ENCODE measurements at regions of chr11 and their contacts with region 1.

Region 1: GRCh38 chr11:106520146-106520912 is 442.9 kb downstream of the AASDHPPT start:
- DNase-seq: no peak
- H3K4me3 Mint-ChIP-seq: no peak overlapping the region
- H3K27ac Mint-ChIP-seq: no peak overlapping the region
- H3K4me1 Mint-ChIP-seq: no peaks in the 10 kb centered on the region
- H3K27me3 Mint-ChIP-seq: no peaks in the 10 kb centered on the region
- CTCF ChIP-seq: no peak

Region 2: GRCh38 chr11:106495046-106495445 is 25.3 kb before region 1 on chr11:
- CTCF ChIA-PET with region 1: no interaction called
- intact Hi-C with region 1: loop called (anchors 1 kb)
- DNase-seq: no peak
- H3K4me3 Mint-ChIP-seq: no peak overlapping the region
- H3K27ac Mint-ChIP-seq: no peak overlapping the region
- H3K4me1 Mint-ChIP-seq: no peaks in the 10 kb centered on the region
- H3K27me3 Mint-ChIP-seq: no peaks in the 10 kb centered on the region
- CTCF ChIP-seq: no peak